CD8-positive, alpha-beta T cell (primary cell): ENCODE measurements at regions of chr5 and their contacts with region 1.

Region 1: GRCh38 chr5:123571927-123572326 is 60.0 kb downstream of the CSNK1G3 start:
- DNase-seq: peak in 2 of 9 experiments; percentile 8 to 15
- ATAC-seq: no peak
- H3K4me3 ChIP-seq: no peak overlapping the region
- H3K4me3 Mint-ChIP-seq: no peak overlapping the region
- H3K27ac ChIP-seq: no peak overlapping the region
- H3K27ac Mint-ChIP-seq: no peak overlapping the region
- H3K4me1 ChIP-seq: peaks cover 5% of the 10 kb centered on the region
- H3K4me1 Mint-ChIP-seq: peaks cover 28% of the 10 kb centered on the region
- H3K27me3 ChIP-seq: no peaks in the 10 kb centered on the region
- H3K27me3 Mint-ChIP-seq: no peaks in the 10 kb centered on the region
- CTCF ChIP-seq: no peak

Region 2: DNA sequence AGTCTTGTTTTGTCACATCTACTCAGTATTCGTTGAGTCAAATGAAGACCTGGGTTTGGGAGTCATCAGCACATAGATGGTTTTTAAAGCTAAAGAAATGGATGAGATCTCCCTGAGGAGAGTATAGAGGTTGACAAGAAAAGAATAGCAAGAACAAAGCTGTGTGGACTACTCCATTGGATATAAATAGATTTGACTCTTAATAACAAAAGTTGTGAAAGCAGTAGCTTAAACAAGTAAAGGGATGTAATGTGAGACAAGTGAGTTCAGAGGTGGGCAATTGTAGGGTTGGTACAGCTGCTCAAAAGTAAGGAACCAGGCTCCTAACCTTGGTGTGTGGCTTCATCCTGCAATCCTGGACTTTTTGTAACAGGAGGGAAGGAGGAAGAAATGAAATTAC is 10.7 kb before region 1 on chr5:
- CTCF ChIA-PET with region 1: no interaction called
- POLR2A ChIA-PET with region 1: interaction called, 3 read pairs
- intact Hi-C with region 1: loop called in 1 of 2 experiments (anchors 1 kb)
- DNase-seq: no peak
- ATAC-seq: no peak
- H3K4me3 ChIP-seq: no peak overlapping the region
- H3K4me3 Mint-ChIP-seq: no peak overlapping the region
- H3K27ac ChIP-seq: no peak overlapping the region
- H3K27ac Mint-ChIP-seq: no peak overlapping the region
- H3K4me1 ChIP-seq: no peaks in the 10 kb centered on the region
- H3K4me1 Mint-ChIP-seq: peaks cover 17% of the 10 kb centered on the region
- H3K27me3 ChIP-seq: no peaks in the 10 kb centered on the region
- H3K27me3 Mint-ChIP-seq: no peaks in the 10 kb centered on the region
- CTCF ChIP-seq: no peak

Region 3: GRCh38 chr5:123949806-123950340 is 377.9 kb after region 1 on chr5:
- CTCF ChIA-PET with region 1: no interaction called
- POLR2A ChIA-PET with region 1: no interaction called
- intact Hi-C with region 1: no loop called
- DNase-seq: no peak
- ATAC-seq: no peak
- H3K4me3 ChIP-seq: no peak overlapping the region
- H3K4me3 Mint-ChIP-seq: no peak overlapping the region
- H3K27ac ChIP-seq: no peak overlapping the region
- H3K27ac Mint-ChIP-seq: no peak overlapping the region
- H3K4me1 ChIP-seq: no peaks in the 10 kb centered on the region
- H3K4me1 Mint-ChIP-seq: no peaks in the 10 kb centered on the region
- H3K27me3 ChIP-seq: no peaks in the 10 kb centered on the region
- H3K27me3 Mint-ChIP-seq: no peaks in the 10 kb centered on the region
- CTCF ChIP-seq: no peak

Region 4: GRCh38 chr5:124274949-124275348 is 703.0 kb after region 1 on chr5:
- CTCF ChIA-PET with region 1: no interaction called
- POLR2A ChIA-PET with region 1: no interaction called
- intact Hi-C with region 1: no loop called
- DNase-seq: no peak
- ATAC-seq: no peak
- H3K4me3 ChIP-seq: no peak overlapping the region
- H3K4me3 Mint-ChIP-seq: no peak overlapping the region
- H3K27ac ChIP-seq: no peak overlapping the region
- H3K27ac Mint-ChIP-seq: no peak overlapping the region
- H3K4me1 ChIP-seq: no peaks in the 10 kb centered on the region
- H3K4me1 Mint-ChIP-seq: no peaks in the 10 kb centered on the region
- H3K27me3 ChIP-seq: no peaks in the 10 kb centered on the region
- H3K27me3 Mint-ChIP-seq: no peaks in the 10 kb centered on the region
- CTCF ChIP-seq: no peak